Heart left ventricle (tissue), 16 donors: ENCODE measurements at regions of chr7 and their contacts with region 1.

Region 1: GRCh38 chr7:65989694-65990080 is 7.7 kb upstream of the GUSB start:
- DNase-seq: no peak
- ATAC-seq: no peak
- H3K4me3 ChIP-seq: no peak overlapping the region
- H3K27ac ChIP-seq: no peak overlapping the region
- H3K4me1 ChIP-seq: peaks cover 0 to 3% (median 0%) of the 10 kb centered on the region in 12 donors
- H3K27me3 ChIP-seq: no peaks in the 10 kb centered on the region
- CTCF ChIP-seq: no peak
- POLR2A ChIP-seq: no peak

Region 2: DNA sequence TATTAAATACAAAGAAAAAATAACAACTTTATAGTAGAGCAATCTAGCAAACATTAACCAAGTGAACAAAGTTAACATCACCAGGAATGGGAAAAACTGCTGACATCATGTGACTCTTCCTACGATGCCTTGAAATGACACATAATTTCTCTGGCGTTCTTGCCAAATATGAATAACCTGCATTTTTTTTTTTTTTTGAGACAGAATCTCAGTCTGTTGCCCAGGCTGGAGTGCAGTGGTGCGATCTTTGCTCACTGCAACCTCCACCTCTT is 243.4 kb before region 1 on chr7:
- intact Hi-C with region 1: loop called in 1 of 10 experiments (anchors 10 kb)
- DNase-seq: no peak
- ATAC-seq: no peak
- H3K4me3 ChIP-seq: no peak overlapping the region
- H3K27ac ChIP-seq: peak overlapping the region in 1 of 12 donors; percentile 79
- H3K4me1 ChIP-seq: peaks cover 0 to 17% (median 7%) of the 10 kb centered on the region in 12 donors
- H3K27me3 ChIP-seq: no peaks in the 10 kb centered on the region
- CTCF ChIP-seq: no peak
- POLR2A ChIP-seq: no peak